Caco-2 (cell line): ENCODE measurements at regions of chr6 and their contacts with region 1.

Region 1: GRCh38 chr6:26122793-26123674 is 35.8 kb downstream of the HFE start:
- DNase-seq: peak; percentile 96 to 98
- H3K4me3 ChIP-seq: peak overlapping the region; percentile 44
- H3K4me3 Mint-ChIP-seq: peak overlapping the region; percentile 90
- H3K27ac Mint-ChIP-seq: peak overlapping the region; percentile 99
- H3K4me1 ChIP-seq: peaks cover 23% of the 10 kb centered on the region
- H3K4me1 Mint-ChIP-seq: peaks cover 36% of the 10 kb centered on the region
- H3K27me3 ChIP-seq: no peaks in the 10 kb centered on the region
- H3K27me3 Mint-ChIP-seq: no peaks in the 10 kb centered on the region
- CTCF ChIP-seq: no peak

Region 2: DNA sequence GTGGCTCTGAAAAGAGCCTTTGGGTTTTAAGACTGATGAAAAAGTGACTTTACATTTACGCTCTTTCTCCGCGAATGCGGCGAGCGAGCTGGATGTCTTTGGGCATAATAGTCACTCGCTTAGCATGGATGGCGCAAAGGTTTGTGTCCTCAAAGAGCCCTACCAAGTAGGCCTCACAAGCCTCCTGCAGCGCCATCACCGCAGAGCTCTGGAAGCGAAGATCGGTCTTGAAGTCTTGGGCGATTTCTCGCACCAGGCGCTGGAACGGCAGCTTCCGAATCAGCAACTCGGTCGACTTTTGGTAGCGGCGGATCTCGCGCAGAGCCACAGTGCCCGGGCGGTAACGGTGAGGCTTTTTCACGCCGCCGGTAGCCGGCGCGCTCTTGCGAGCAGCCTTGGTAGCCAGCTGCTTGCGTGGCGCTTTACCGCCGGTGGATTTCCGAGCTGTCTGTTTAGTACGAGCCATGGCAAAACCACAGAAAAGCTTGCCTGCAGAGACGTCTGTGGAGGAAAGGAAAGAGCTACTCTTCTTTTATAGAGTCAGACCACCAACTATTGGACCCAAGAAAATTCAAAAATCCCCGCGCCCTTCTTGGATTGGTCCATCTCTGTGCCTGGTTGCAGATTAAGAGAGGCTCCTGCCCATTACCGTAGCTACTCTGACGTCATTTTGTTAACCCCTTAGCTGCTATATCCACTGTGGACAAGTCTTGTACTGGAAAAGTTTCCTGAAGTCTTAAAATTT is 91.3 kb before region 1 on chr6:
- CTCF ChIA-PET with region 1: no interaction called
- POLR2A ChIA-PET with region 1: interaction called, 79 read pairs
- intact Hi-C with region 1: loop called (anchors 1 kb)
- DNase-seq: peak; percentile 95 to 96
- H3K4me3 ChIP-seq: peak overlapping the region; percentile 66
- H3K4me3 Mint-ChIP-seq: peak overlapping the region; percentile 87
- H3K27ac Mint-ChIP-seq: peak overlapping the region; percentile 100
- H3K4me1 ChIP-seq: peaks cover 9% of the 10 kb centered on the region
- H3K4me1 Mint-ChIP-seq: peaks cover 51% of the 10 kb centered on the region
- H3K27me3 ChIP-seq: no peaks in the 10 kb centered on the region
- H3K27me3 Mint-ChIP-seq: peaks cover 4% of the 10 kb centered on the region
- CTCF ChIP-seq: no peak

Region 3: GRCh38 chr6:26103770-26104456 is 19.1 kb before region 1 on chr6:
- CTCF ChIA-PET with region 1: no interaction called
- POLR2A ChIA-PET with region 1: interaction called, 150 read pairs
- intact Hi-C with region 1: loop called (anchors 1 kb)
- DNase-seq: peak; percentile 91 to 92
- H3K4me3 ChIP-seq: peak overlapping the region; percentile 32
- H3K4me3 Mint-ChIP-seq: peak overlapping the region; percentile 80
- H3K27ac Mint-ChIP-seq: peak overlapping the region; percentile 98
- H3K4me1 ChIP-seq: peaks cover 18% of the 10 kb centered on the region
- H3K4me1 Mint-ChIP-seq: peaks cover 14% of the 10 kb centered on the region
- H3K27me3 ChIP-seq: no peaks in the 10 kb centered on the region
- H3K27me3 Mint-ChIP-seq: peaks cover 5% of the 10 kb centered on the region
- CTCF ChIP-seq: peak; percentile 21 to 27

Region 4: DNA sequence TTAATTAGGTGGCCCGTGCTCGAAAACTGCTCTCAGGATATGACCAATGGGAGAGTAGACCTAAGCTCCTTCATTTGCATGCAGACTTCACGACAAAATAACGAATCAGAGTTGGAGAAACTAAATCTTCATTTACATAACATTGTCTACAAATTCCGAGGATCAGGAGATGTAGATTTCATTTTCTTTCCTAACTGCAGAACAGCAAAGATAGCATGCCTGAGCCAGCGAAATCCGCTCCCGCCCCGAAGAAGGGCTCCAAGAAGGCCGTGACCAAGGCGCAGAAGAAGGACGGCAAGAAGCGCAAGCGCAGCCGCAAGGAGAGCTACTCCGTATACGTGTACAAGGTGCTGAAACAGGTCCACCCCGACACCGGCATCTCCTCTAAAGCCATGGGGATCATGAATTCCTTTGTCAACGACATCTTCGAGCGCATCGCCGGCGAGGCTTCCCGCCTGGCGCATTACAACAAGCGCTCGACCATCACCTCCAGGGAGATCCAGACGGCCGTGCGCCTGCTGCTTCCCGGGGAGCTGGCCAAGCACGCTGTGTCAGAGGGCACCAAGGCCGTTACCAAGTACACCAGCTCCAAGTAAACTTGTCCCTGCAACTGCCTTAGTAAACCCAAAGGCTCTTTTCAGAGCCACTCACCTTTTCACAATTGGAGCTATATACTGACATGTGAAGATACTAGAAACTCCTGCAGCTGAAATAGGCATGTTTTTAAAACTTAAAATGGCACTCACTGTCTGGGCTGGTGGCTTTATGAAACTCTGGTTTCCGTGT is 60.7 kb after region 1 on chr6:
- CTCF ChIA-PET with region 1: no interaction called
- POLR2A ChIA-PET with region 1: interaction called, 36 read pairs
- intact Hi-C with region 1: no loop called
- DNase-seq: peak; percentile 61 to 63
- H3K4me3 ChIP-seq: peak overlapping the region; percentile 41
- H3K4me3 Mint-ChIP-seq: peak overlapping the region; percentile 52
- H3K27ac Mint-ChIP-seq: peak overlapping the region; percentile 88
- H3K4me1 ChIP-seq: peaks cover 3% of the 10 kb centered on the region; the same call in 1 of the 2 replicates
- H3K4me1 Mint-ChIP-seq: peaks cover 25% of the 10 kb centered on the region
- H3K27me3 ChIP-seq: no peaks in the 10 kb centered on the region
- H3K27me3 Mint-ChIP-seq: no peaks in the 10 kb centered on the region
- CTCF ChIP-seq: no peak

Region 5: DNA sequence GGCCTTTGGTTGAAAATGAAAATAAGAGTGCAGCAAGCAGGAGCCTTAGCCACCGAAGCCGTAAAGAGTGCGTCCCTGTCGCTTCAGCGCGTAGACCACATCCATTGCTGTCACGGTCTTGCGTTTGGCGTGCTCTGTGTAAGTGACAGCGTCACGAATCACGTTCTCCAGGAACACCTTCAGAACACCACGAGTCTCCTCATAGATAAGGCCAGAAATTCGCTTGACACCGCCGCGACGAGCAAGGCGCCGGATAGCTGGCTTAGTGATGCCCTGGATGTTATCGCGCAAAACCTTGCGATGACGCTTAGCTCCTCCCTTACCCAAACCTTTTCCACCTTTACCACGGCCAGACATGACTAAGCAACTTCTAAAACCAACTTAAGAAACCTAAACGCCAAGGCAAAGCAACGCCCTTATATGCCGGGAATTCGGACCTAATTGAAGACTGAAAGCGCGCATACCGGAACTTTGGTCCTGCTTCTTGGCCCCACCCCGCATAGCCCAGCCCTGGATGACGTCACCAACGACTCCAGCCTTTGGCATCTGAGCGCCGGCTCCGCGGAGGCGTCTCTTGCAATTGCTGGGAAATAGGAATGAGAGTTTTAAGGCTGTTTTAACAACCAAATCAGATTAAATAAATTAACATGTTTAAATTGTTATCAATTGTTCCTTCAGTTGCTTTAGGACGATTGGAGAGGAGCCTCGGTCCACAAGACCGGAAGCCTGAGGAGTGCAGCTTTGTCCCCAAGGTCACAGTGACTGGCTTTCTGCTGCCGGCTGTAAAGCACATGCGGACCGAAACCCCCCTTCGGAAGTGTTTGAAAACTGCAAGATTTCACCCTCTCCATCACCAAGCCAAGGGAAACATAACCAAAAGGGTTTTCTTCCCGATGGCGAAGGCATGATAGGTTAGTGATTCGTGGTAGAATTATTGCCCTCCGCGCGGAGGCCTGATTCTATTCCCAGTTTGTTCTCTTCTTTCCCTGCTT is 162.4 kb after region 1 on chr6:
- CTCF ChIA-PET with region 1: no interaction called
- POLR2A ChIA-PET with region 1: no interaction called
- intact Hi-C with region 1: no loop called
- DNase-seq: peak; percentile 97 to 99
- H3K4me3 ChIP-seq: peak overlapping the region; percentile 55
- H3K4me3 Mint-ChIP-seq: peak overlapping the region; percentile 82
- H3K27ac Mint-ChIP-seq: peak overlapping the region; percentile 100
- H3K4me1 ChIP-seq: no peaks in the 10 kb centered on the region
- H3K4me1 Mint-ChIP-seq: peaks cover 17% of the 10 kb centered on the region
- H3K27me3 ChIP-seq: no peaks in the 10 kb centered on the region
- H3K27me3 Mint-ChIP-seq: peaks cover 6% of the 10 kb centered on the region
- CTCF ChIP-seq: no peak

Region 6: DNA sequence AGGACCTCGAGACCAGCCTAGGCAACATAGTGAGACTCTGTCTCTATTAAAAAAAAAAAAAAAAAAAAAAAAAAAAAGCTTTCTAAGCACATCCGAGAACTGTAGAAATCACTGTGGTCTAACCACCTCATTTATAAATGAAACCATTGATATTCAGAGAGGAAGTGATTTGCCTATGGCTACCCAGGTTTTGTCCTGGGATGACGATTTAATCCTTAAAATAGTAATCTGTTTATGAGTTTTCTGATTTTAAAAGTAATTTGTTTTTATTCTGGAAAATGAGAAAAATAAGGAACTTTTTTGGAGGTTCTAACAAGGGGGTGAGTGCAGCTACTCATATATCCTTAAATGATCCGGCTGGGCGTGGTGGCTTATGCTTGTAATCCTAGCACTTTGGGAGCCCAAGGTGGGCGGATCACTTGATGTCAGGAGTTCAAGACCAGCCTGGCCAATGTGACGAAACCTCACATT is 235.5 kb after region 1 on chr6:
- CTCF ChIA-PET with region 1: no interaction called
- POLR2A ChIA-PET with region 1: interaction called, 16 read pairs
- intact Hi-C with region 1: no loop called
- DNase-seq: no peak
- H3K4me3 ChIP-seq: no peak overlapping the region
- H3K4me3 Mint-ChIP-seq: no peak overlapping the region
- H3K27ac Mint-ChIP-seq: no peak overlapping the region
- H3K4me1 ChIP-seq: peaks cover 5% of the 10 kb centered on the region
- H3K4me1 Mint-ChIP-seq: peaks cover 7% of the 10 kb centered on the region
- H3K27me3 ChIP-seq: no peaks in the 10 kb centered on the region
- H3K27me3 Mint-ChIP-seq: no peaks in the 10 kb centered on the region
- CTCF ChIP-seq: no peak